ENCODE measurements at regions of chr9 and their contacts with region 1.

Region 1: GRCh38 chr9:95510709-95511615 is 5.8 kb downstream of the PTCH1 start:
- DNase-seq: peak; percentile 77 to 91
- ATAC-seq: peak; percentile 44 to 80 (median 68)
- H3K4me3 ChIP-seq: peak overlapping the region; percentile 66
- H3K4me3 Mint-ChIP-seq: peak overlapping the region; percentile 94
- H3K27ac ChIP-seq: peak overlapping the region; percentile 62
- H3K27ac Mint-ChIP-seq: peak overlapping the region; percentile 88 to 93
- H3K4me1 ChIP-seq: peaks cover 54% of the 10 kb centered on the region
- H3K4me1 Mint-ChIP-seq: peaks cover 49 to 57% of the 10 kb centered on the region in 2 donors
- H3K27me3 ChIP-seq: peaks cover 35% of the 10 kb centered on the region
- H3K27me3 Mint-ChIP-seq: peaks cover 7 to 12% of the 10 kb centered on the region in 2 donors
- CTCF ChIP-seq: no peak

Region 2: DNA sequence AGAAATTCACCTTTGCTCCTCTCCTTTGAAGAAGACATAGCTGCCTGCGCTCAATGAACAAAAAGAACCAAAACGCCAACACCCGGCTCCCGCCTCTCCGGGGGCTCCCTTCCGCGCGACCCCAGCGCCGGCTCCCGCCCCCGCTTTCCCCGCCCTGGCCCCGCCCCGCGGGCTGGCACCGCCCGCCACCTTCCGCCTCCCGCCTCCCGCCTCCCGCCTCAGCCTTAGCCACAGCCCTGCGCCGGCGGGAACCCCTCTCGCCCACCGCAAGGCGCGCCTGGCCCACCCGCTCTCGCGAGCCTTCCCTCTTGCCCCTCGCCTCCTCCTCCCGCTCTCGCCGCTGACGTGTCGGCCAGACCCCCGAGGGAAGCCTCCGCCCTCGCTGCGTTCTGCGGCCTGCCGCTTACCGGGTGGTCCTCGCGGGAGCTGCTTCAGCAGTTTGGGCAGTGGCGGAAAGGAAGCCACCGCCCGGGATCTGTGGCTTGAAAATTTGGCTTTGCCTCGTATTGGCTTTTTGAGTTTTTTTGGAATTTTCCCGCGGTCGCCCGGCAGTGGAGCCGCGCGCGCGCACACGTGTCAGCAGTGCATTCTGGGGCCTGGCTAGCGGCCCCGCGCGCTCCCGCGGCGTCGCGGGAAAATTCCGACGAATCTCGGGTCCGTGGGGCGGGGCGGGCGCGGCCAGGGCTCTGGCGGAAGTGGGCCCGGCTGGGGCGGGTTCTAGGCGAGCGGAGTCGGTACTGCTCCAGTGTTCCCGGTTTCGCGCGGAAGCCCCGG is 193.7 kb before region 1 on chr9 and contains the start of gene FANCC:
- intact Hi-C with region 1: loop called (anchors 5 kb)
- DNase-seq: peak; percentile 80 to 91
- ATAC-seq: peak; percentile 89 to 93 (median 90)
- H3K4me3 ChIP-seq: peak within 1 kb of the TSS; percentile 80
- H3K4me3 Mint-ChIP-seq: peak within 1 kb of the TSS; percentile 92
- H3K27ac ChIP-seq: peak within 1 kb of the TSS; percentile 72
- H3K27ac Mint-ChIP-seq: peak within 1 kb of the TSS; percentile 82 to 89
- H3K4me1 ChIP-seq: no peaks in the 10 kb centered on the region
- H3K4me1 Mint-ChIP-seq: peaks cover 10 to 24% of the 10 kb centered on the region in 2 donors
- H3K27me3 ChIP-seq: no peaks in the 10 kb centered on the region
- H3K27me3 Mint-ChIP-seq: peaks cover 4 to 20% of the 10 kb centered on the region in 2 donors
- CTCF ChIP-seq: no peak
- total RNA-seq, gene FANCC: 9.9 to 18.9 (median 12.8) TPM

Region 3: DNA sequence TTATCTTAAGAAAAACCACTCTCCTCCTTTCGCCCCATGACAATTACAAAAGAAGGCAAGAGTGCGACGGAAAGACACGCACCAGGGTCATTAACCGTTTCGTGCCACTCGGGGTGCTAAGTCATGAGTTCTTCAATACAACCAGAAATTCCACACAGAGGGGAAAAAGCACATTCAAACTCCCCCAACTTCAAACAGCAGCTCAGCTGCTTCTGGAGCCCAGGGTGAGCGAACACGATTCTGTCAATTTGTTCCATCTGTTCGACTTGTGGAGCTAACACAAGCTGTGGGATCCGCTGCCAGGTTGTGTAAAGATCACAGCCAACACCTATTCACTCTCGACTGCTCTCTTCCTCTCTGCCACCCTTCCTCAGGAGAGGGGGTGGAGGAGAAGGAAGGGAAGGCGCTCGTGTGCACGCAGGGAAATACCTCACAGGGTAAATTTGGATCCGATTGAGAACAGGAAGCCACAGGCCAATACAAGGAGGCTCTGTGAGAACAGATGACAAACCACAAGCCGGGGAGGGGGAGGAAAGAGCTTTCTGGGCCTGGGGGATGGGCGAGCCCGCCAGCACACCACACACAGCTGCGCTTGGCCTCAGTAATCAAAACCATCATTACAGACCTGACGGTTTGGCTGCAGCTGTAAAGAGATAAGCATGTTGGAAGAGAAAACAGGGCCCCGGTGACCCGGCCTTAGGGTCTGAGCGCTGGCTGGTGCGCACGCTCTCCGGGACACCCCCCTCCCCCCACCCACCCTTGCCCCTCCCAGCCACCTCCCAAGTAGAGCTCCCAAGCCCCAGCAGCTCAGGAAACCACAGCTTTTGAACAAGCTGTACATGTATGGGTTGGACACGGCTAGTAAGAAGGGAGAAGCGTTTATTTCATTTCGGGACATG is 48.5 kb before region 1 on chr9:
- intact Hi-C with region 1: loop called (anchors 5 kb)
- DNase-seq: peak; percentile 55 to 92
- ATAC-seq: peak; percentile 85 to 98 (median 91)
- H3K4me3 ChIP-seq: peak overlapping the region; percentile 15
- H3K4me3 Mint-ChIP-seq: peak overlapping the region; percentile 96
- H3K27ac ChIP-seq: peak overlapping the region; percentile 2
- H3K27ac Mint-ChIP-seq: peak overlapping the region; percentile 84 to 87
- H3K4me1 ChIP-seq: peaks cover 26% of the 10 kb centered on the region
- H3K4me1 Mint-ChIP-seq: peaks cover 52 to 68% of the 10 kb centered on the region in 2 donors
- H3K27me3 ChIP-seq: no peaks in the 10 kb centered on the region
- H3K27me3 Mint-ChIP-seq: no peaks in the 10 kb centered on the region
- CTCF ChIP-seq: no peak

Region 4: DNA sequence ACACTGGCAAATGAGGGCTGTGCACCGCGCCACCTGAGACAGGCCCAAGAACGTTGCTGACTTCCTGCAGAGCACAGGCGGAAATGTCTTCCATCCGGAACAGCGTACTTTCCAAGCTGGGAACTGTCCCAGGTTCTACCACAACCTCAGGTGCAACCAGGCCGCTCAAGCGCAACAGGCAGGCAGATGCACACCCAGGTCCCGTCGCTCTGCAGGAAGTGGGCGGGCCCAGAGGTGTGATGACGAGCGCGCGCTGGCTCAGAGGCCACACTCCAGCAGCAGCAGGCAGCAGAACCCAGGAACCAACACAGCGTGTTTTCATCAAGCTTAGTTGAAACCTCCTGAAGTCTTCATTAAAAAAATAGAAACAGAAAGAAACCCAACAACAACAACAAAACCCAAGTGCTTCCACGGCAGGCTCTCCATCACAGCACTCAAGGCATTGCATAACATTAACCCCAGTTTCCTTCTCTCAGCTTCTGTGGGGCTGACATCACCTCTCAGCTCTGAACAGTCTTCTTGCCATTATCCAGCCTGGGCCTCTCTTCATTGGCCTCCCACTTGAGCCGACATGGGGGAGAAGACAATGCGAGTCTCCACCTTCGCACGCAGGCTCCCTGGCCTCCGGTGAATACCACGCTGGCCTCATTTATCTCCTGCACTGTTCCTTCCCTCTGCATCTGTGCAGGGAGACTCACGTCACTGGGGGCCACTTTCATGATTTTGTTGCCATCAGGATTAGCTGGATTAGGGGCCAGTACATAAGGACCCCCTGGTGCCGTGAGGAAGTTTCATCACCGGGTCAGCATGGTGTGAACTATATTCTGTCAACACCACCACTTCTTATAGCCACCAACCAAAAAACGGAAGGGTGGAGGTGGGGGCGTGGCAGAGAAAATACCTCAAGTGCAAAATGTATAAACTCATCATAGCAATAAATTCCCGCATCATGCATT is 16.3 kb before region 1 on chr9:
- intact Hi-C with region 1: loop called (anchors 1 kb)
- DNase-seq: peak; percentile 72 to 94
- ATAC-seq: peak; percentile 86 to 91 (median 90)
- H3K4me3 ChIP-seq: peak overlapping the region; percentile 38
- H3K4me3 Mint-ChIP-seq: peak overlapping the region; percentile 98
- H3K27ac ChIP-seq: peak overlapping the region; percentile 96
- H3K27ac Mint-ChIP-seq: peak overlapping the region; percentile 96 to 99
- H3K4me1 ChIP-seq: peaks cover 44% of the 10 kb centered on the region
- H3K4me1 Mint-ChIP-seq: peaks cover 66% of the 10 kb centered on the region in 2 donors
- H3K27me3 ChIP-seq: no peaks in the 10 kb centered on the region
- H3K27me3 Mint-ChIP-seq: peaks cover 0 to 9% of the 10 kb centered on the region in 2 donors
- CTCF ChIP-seq: no peak

Region 5: DNA sequence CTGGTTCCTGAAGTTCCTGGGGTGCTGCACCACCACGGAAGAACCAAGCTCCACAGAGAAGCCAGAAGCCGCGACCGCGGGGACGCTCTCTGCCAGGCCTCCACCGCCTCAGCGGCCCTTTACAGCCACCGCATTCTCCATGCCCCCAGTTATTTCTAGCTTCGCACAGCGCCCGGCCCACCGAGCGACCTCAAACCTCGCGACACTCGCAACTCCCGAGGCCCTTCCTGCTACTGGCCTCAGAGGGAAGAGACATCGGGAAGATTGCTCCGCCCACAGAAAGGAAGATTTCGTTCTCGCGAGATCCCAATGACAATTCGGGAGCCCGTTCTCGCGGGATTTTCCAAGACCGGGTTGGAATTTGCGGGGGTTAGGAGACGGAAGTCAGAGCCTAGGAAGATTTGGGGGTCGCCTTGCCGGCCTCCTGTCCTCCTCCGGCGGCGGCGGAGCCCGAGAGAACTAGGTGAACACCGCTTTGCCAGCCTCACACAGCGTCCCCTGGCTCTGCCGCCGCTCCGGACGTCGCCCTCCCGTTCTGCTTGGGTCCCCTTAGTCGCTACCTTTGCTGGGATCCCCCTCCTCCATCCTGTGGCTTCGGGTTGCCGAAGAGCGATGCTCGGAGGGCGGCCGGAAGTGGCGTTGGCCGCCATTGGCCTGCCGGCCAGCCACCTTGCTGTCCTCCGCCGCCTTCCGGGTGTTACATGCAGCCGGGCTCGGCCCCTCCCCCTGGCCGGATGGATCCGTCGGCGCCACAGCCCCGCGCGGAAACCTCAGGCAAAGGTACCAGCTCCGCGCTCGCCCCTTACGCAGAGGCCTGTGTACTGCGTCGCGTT is 364.6 kb after region 1 on chr9 and contains the start of gene ERCC6L2:
- intact Hi-C with region 1: loop called (anchors 5 kb)
- DNase-seq: peak; percentile 92 to 97
- ATAC-seq: peak; percentile 85 to 93 (median 89)
- H3K4me3 ChIP-seq: peak within 1 kb of the TSS; percentile 95
- H3K4me3 Mint-ChIP-seq: no peak within 1 kb of the TSS
- H3K27ac ChIP-seq: no peak within 1 kb of the TSS
- H3K27ac Mint-ChIP-seq: no peak within 1 kb of the TSS
- H3K4me1 ChIP-seq: peaks cover 20% of the 10 kb centered on the region
- H3K4me1 Mint-ChIP-seq: peaks cover 9 to 16% of the 10 kb centered on the region in 2 donors
- H3K27me3 ChIP-seq: no peaks in the 10 kb centered on the region
- H3K27me3 Mint-ChIP-seq: no peaks in the 10 kb centered on the region
- CTCF ChIP-seq: no peak
- total RNA-seq, gene ERCC6L2: 37.1 to 45.8 (median 38.6) TPM

Region 6: DNA sequence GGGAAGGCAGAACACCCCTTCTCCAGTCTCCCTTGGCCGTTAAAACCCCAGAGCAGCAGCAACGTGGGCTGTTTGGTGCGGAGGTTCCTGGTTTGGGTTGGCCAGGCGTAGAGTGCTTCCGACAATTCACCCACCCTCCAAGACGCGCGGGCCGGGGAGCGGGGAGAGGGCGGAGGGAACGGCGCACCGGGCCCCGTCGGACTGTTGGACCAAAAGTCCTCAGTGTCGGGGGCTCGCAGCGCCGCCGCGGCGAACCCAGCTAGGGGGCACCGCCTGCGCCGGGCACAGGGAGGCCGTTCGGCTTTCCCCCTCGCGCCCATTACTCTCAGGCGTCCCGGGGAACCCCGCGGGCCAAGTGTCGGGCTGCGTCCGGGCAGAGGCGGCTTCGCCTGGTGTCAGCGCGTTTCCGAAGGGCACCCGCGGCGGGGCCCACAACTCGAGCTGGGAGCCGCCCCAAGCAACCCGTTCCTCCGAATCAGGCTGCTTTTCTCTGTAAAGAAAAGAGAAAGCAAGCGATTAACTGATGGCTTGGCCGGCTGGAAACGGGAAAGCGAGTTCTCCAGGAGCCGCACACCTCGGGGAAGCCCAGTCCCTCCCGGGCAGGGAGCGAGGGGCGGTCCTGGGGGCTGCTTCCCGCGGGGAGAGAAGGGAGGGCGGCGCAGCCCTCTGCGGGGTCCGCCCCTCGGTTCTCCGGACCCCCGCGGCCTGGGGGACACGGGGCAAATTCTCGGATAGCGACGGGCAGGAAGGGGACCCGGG is 510.0 kb after region 1 on chr9:
- intact Hi-C with region 1: loop called (anchors 5 kb)
- DNase-seq: peak; percentile 64 to 74
- ATAC-seq: peak; percentile 62 to 75 (median 68)
- H3K4me3 ChIP-seq: peak overlapping the region; percentile 56
- H3K4me3 Mint-ChIP-seq: peak overlapping the region; percentile 93
- H3K27ac ChIP-seq: peak overlapping the region; percentile 95
- H3K27ac Mint-ChIP-seq: peak overlapping the region; percentile 91 to 99
- H3K4me1 ChIP-seq: peaks cover 47% of the 10 kb centered on the region
- H3K4me1 Mint-ChIP-seq: peaks cover 76 to 86% of the 10 kb centered on the region in 2 donors
- H3K27me3 ChIP-seq: no peaks in the 10 kb centered on the region
- H3K27me3 Mint-ChIP-seq: no peaks in the 10 kb centered on the region
- CTCF ChIP-seq: no peak

Region 7: GRCh38 chr9:96418074-96418809 is 907.3 kb after region 1 on chr9 and contains the start of gene ZNF367:
- intact Hi-C with region 1: loop called (anchors 10 kb)
- DNase-seq: peak; percentile 88 to 91
- ATAC-seq: peak; percentile 72 to 88 (median 80)
- H3K4me3 ChIP-seq: peak within 1 kb of the TSS; percentile 86
- H3K4me3 Mint-ChIP-seq: peak within 1 kb of the TSS; percentile 90
- H3K27ac ChIP-seq: peak within 1 kb of the TSS; percentile 91
- H3K27ac Mint-ChIP-seq: peak within 1 kb of the TSS; percentile 92 to 97
- H3K4me1 ChIP-seq: peaks cover 35% of the 10 kb centered on the region
- H3K4me1 Mint-ChIP-seq: peaks cover 28 to 33% of the 10 kb centered on the region in 2 donors
- H3K27me3 ChIP-seq: no peaks in the 10 kb centered on the region
- H3K27me3 Mint-ChIP-seq: no peaks in the 10 kb centered on the region
- CTCF ChIP-seq: no peak
- total RNA-seq, gene ZNF367: 4.4 to 6.2 (median 4.5) TPM